ENCODE measurements at regions of chr11 and their contacts with region 1.

Region 1: DNA sequence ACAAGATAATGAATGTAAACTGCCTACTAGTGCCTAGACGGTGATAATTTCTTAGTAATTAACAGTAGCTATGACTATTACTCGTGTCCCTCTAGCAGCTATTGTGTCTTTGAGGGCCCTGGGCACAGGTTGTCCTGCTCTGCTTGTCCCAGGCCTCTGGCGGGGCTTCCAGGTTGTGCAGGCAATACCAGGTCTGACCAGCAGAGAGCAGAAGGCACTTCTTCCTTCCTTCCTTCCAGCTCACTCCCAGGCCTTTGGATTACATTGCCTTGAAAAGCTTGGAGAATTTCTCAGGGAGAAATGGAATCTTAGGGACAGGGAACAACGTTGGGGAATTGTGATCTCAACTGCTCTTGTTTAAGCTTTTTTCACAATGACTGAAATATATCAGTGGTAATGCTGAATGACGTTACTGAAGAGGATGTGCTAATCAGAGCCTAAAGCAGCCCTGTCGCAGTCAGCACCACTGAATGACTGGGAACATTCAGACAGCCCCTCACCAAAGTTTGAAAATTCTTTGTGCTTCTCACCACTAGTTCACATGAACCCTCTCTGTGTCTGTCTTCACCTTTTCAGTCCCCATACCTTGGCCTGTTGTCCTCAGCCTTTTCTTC is 8.4 kb upstream of the CCKBR start:
- DNase-seq: peak; percentile 78
- ATAC-seq: peak; percentile 88
- H3K4me3 ChIP-seq: no peak overlapping the region
- H3K27ac ChIP-seq: no peak overlapping the region
- H3K4me1 ChIP-seq: no peaks in the 10 kb centered on the region
- H3K27me3 ChIP-seq: peaks cover 17% of the 10 kb centered on the region; the same call in 1 of the 2 replicates
- CTCF ChIP-seq: peak; percentile 80

Region 2: DNA sequence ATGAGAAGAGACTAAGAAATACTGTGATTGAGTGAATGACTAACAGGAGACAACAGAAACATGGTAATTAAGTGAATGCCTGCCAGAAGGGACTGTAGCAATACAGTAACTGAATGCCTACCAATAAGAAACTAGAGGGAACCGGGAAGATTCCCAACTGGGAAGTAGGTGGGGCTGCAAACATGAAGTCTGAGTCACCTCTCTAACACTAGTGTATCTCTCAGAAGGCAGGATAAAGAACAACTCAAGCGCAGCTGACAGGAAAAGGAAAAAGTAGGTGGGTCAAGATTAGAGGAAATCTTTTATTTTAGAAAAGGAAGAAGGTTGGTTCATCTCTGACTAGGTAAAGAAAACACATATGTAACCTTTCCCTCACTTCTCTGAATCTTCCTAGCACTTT is 31.9 kb before region 1 on chr11:
- CTCF ChIA-PET with region 1: no interaction called
- POLR2A ChIA-PET with region 1: no interaction called
- intact Hi-C with region 1: loop called (anchors 1 kb)
- DNase-seq: peak; percentile 89
- ATAC-seq: peak; percentile 99
- H3K4me3 ChIP-seq: no peak overlapping the region
- H3K27ac ChIP-seq: peak overlapping the region; percentile 69
- H3K4me1 ChIP-seq: peaks cover 22% of the 10 kb centered on the region
- H3K27me3 ChIP-seq: no peaks in the 10 kb centered on the region
- CTCF ChIP-seq: no peak

Region 3: GRCh38 chr11:6315811-6316425 is 64.7 kb after region 1 on chr11:
- CTCF ChIA-PET with region 1: interaction called, 3 read pairs
- POLR2A ChIA-PET with region 1: no interaction called
- intact Hi-C with region 1: loop called (anchors 1 kb)
- DNase-seq: peak; percentile 64
- ATAC-seq: peak; percentile 98
- H3K4me3 ChIP-seq: no peak overlapping the region
- H3K27ac ChIP-seq: no peak overlapping the region
- H3K4me1 ChIP-seq: no peaks in the 10 kb centered on the region
- H3K27me3 ChIP-seq: peaks cover 35% of the 10 kb centered on the region
- CTCF ChIP-seq: peak; percentile 84

Region 4: GRCh38 chr11:6353367-6353987 is 102.2 kb after region 1 on chr11:
- CTCF ChIA-PET with region 1: no interaction called
- POLR2A ChIA-PET with region 1: no interaction called
- intact Hi-C with region 1: loop called (anchors 2 kb)
- DNase-seq: peak; percentile 68
- ATAC-seq: peak; percentile 71
- H3K4me3 ChIP-seq: no peak overlapping the region
- H3K27ac ChIP-seq: no peak overlapping the region
- H3K4me1 ChIP-seq: peaks cover 4% of the 10 kb centered on the region; the same call in 1 of the 2 replicates
- H3K27me3 ChIP-seq: peaks cover 19% of the 10 kb centered on the region; the same call in 1 of the 2 replicates
- CTCF ChIP-seq: peak; percentile 95

Region 5: DNA sequence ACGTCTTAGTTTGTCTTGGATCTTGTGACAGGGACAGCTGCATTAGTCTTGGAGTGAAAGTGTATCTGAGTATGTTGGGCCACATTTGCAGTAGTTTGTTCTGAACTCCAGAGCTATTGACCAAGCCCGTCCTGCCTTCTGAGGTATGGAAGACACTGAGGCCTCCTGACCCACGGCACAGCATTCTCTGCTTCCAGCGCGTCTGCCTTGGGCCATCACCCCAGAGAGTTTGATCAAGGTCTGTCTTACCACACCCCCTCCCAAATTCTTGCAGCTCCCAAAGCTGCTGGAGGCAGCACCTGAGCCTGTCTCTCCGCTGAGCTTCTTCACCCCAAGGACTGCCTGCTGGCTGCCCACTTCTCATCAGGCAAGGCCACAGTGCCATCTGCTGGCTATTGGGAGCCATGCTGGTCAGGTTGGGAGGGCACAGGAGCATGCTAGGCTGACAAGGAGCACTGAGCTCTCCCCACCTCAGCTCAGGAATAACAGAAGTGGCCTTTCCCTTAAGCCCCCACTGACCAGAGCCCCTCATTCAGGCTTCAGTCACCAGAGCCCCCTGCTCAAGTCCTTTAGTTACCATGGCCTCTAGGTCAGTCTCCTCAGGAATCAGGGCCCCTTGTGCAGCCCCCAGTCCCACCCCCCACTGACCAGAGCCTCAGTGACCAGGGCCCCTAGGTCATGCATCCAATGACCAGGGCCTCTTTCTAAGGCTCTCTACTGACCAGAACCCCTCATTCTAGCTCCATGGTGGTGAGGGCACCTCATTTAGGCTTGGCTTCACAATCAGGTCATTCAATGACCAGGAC is 111.8 kb after region 1 on chr11:
- CTCF ChIA-PET with region 1: interaction called, 15 read pairs
- POLR2A ChIA-PET with region 1: no interaction called
- intact Hi-C with region 1: no loop called
- DNase-seq: peak; percentile 77
- ATAC-seq: peak; percentile 99
- H3K4me3 ChIP-seq: no peak overlapping the region
- H3K27ac ChIP-seq: no peak overlapping the region
- H3K4me1 ChIP-seq: no peaks in the 10 kb centered on the region
- H3K27me3 ChIP-seq: no peaks in the 10 kb centered on the region
- CTCF ChIP-seq: peak; percentile 87

Measured in PC-3 (cell line).